Mammary epithelial cell (primary cell): ENCODE measurements at regions of chr15 and their contacts with region 1.

Region 1: GRCh38 chr15:55379095-55379494 is 29.1 kb downstream of the CCPG1 start:
- DNase-seq: no peak
- H3K4me3 ChIP-seq: no peak overlapping the region
- H3K27ac ChIP-seq: no peak overlapping the region
- H3K4me1 ChIP-seq: no peaks in the 10 kb centered on the region
- H3K27me3 ChIP-seq: no peaks in the 10 kb centered on the region
- CTCF ChIP-seq: no peak

Region 2: DNA sequence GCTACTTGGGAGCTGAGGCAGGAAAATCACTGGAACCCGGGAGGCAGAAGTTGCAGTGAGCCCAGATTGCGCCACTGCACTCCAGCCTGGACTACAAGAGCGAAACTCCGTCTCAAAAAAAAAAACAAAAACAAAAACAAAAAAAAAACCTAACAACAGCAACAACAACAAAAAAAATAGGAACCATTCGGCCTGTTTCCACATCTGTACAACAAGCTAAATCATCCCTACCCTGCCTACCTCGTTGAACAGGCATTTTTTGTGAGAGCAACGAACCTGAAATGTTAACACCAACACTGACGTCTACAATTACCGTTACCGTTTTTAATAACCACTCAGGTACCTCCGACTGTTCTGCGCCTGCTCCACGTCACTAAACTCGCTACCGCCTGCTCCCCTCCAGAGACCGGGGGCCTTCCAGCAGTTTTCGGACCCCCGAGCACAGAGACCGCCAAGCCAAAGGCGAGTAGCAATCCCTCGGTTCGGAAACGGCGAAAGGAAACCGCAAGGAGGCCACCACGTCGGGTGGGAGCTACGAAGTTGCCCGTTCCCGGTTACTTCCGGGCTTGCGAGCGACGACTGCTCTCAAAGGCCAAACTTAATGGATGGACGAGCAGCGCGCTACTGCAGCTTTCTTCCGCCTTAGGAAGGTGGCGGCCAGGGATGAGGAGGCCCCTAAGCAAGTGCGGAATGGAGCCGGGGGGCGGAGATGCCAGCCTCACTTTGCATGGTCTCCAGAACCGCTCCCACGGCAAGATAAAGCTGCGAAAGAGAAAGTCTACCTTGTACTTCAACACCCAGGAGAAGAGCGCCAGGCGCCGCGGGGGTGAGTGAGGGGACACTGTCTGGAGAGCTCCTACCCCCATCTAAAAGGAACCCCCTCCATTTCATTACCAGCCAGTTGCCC is 60.3 kb before region 1 on chr15 and contains the starts of genes PIGB and PIGBOS1:
- CTCF ChIA-PET with region 1: no interaction called
- dilution Hi-C with region 1: loop called (anchors 5 kb)
- in situ Hi-C with region 1: no loop called
- intact Hi-C with region 1: loop called (anchors 5 kb)
- DNase-seq: peak; percentile 85
- H3K4me3 ChIP-seq: peak within 1 kb of the TSS; percentile 63 to 88 (median 67)
- H3K27ac ChIP-seq: peak within 1 kb of the TSS; percentile 89
- H3K4me1 ChIP-seq: peaks cover 4% of the 10 kb centered on the region
- H3K27me3 ChIP-seq: no peaks in the 10 kb centered on the region
- CTCF ChIP-seq: no peak
- total RNA-seq, gene PIGB: 23.8 to 24.4 TPM
- total RNA-seq, gene PIGBOS1: 3.8 to 10.9 TPM

Region 3: GRCh38 chr15:55499151-55499550 is 120.1 kb after region 1 on chr15:
- CTCF ChIA-PET with region 1: no interaction called
- dilution Hi-C with region 1: no loop called
- in situ Hi-C with region 1: no loop called
- intact Hi-C with region 1: no loop called
- DNase-seq: no peak
- H3K4me3 ChIP-seq: no peak overlapping the region
- H3K27ac ChIP-seq: no peak overlapping the region
- H3K4me1 ChIP-seq: no peaks in the 10 kb centered on the region
- H3K27me3 ChIP-seq: no peaks in the 10 kb centered on the region
- CTCF ChIP-seq: no peak